Dendritic cell treated with granulocyte-macrophage colony-stimulating factor and Interleukin-4, amounts not matched to agents 40 ng/mL and 50 ng/mL, for 4 days (primary cell): ENCODE measurements at regions of chr4 and their contacts with region 1.

Region 1: DNA sequence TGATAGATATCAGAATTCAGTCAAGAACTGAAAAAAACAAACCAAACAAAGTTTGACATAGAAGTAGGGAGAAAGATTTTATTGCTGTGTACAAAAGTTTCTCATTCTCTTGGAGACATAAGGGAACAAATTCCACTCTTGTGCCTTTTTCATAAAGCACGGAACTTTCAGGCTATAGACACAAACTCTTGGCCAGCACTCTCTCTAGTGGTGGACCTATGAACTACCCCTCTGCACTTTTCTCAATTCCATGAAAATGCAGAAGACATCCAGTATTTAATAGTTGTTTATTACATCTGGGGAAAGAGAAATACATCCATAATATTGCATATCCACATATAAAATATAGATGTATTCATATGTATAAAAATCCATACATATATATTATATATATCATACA is 291.6 kb upstream of the HS3ST1 start:
- H3K4me3 Mint-ChIP-seq: no peak overlapping the region
- H3K27ac Mint-ChIP-seq: no peak overlapping the region
- H3K4me1 Mint-ChIP-seq: no peaks in the 10 kb centered on the region
- H3K27me3 Mint-ChIP-seq: no peaks in the 10 kb centered on the region

Region 2: GRCh38 chr4:11418610-11419009 is 301.7 kb before region 1 on chr4:
- intact Hi-C with region 1: loop called (anchors 5 kb)
- H3K4me3 Mint-ChIP-seq: no peak overlapping the region
- H3K27ac Mint-ChIP-seq: no peak overlapping the region
- H3K4me1 Mint-ChIP-seq: no peaks in the 10 kb centered on the region
- H3K27me3 Mint-ChIP-seq: no peaks in the 10 kb centered on the region